CD14-positive monocyte (primary cell): ENCODE measurements at regions of chr15 and their contacts with region 1.

Region 1: GRCh38 chr15:55282284-55282833 is 7.3 kb downstream of the RAB27A start:
- DNase-seq: peak; percentile 63 to 83 (median 82)
- H3K4me3 ChIP-seq: peak overlapping the region; percentile 5 to 65 (median 49)
- H3K4me3 Mint-ChIP-seq: peak overlapping the region; percentile 76 to 84
- H3K27ac ChIP-seq: peak overlapping the region; percentile 84 to 89
- H3K27ac Mint-ChIP-seq: peak overlapping the region; percentile 91 to 99 (median 97)
- H3K4me1 ChIP-seq: peaks cover 92 to 97% of the 10 kb centered on the region in 2 donors
- H3K4me1 Mint-ChIP-seq: peaks cover 96% of the 10 kb centered on the region
- H3K27me3 ChIP-seq: no peaks in the 10 kb centered on the region
- H3K27me3 Mint-ChIP-seq: no peaks in the 10 kb centered on the region
- CTCF ChIP-seq: no peak

Region 2: DNA sequence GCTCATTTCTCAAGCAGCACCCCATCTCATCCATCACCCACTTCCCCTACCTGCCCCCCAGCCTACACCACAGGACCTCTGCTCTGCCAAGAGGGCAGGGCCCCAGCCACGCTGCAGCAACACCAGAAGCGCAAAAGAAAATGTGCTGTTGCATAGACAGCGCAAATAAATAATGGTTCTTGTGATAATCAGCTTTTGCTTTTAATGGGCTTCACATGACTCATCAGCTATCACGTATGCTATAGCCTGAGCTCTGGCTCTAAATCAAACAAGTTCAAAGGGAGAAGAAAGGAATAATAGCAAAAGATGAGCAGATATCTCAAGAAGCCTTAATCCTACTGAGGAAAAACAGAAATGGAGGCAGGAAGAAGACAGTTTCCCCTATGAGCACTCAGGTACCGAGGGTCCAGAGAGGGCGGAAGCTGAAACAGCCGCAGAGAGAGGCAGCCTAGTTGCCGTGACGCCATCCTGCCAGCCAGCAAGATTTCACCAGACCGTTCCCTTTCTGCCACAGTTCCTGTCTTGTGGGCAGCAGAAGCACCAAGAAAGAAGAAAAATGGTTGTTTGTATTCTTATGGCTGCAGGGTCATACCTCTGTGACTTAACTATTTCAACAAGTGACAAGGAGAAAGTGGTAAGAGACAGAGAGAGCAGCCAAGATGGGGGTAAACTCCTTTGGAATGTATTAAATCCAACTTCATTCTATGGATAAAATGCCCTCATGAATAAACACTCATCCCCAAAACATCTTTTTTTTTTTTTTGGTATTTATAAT is 14.8 kb before region 1 on chr15:
- intact Hi-C with region 1: loop called in 1 of 2 experiments (anchors 2 kb)
- DNase-seq: peak; percentile 80 to 92 (median 84)
- H3K4me3 ChIP-seq: peak overlapping the region; percentile 26 to 59 (median 50)
- H3K4me3 Mint-ChIP-seq: peak overlapping the region; percentile 67 to 76
- H3K27ac ChIP-seq: peak overlapping the region; percentile 84 to 92
- H3K27ac Mint-ChIP-seq: peak overlapping the region; percentile 91 to 97 (median 96)
- H3K4me1 ChIP-seq: peaks cover 33 to 36% of the 10 kb centered on the region in 2 donors
- H3K4me1 Mint-ChIP-seq: peaks cover 68% of the 10 kb centered on the region
- H3K27me3 ChIP-seq: no peaks in the 10 kb centered on the region
- H3K27me3 Mint-ChIP-seq: no peaks in the 10 kb centered on the region
- CTCF ChIP-seq: no peak

Region 3: DNA sequence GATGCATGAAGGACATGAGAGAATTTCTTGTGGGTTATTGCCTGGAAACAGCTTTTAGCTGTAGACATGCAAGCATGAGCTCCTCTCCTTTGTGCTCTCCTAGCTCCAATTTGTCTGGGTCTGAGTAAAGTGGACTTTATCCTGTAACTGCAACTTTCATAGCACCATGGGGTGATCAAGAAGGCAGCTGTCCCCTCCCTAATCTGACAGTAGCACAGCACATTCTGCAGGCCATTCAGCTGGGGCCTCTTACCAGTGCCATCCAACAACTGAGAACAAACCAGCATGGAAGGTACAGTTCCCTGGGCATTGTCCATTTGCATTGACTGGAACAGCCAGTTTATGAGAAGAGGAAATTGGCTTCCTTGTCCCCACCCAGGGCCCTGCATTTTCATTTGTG is 15.0 kb after region 1 on chr15:
- intact Hi-C with region 1: no loop called
- DNase-seq: no peak
- H3K4me3 ChIP-seq: no peak overlapping the region
- H3K4me3 Mint-ChIP-seq: no peak overlapping the region
- H3K27ac ChIP-seq: no peak overlapping the region
- H3K27ac Mint-ChIP-seq: no peak overlapping the region
- H3K4me1 ChIP-seq: peaks cover 7 to 17% of the 10 kb centered on the region in 2 donors
- H3K4me1 Mint-ChIP-seq: peaks cover 20% of the 10 kb centered on the region
- H3K27me3 ChIP-seq: no peaks in the 10 kb centered on the region
- H3K27me3 Mint-ChIP-seq: peaks cover 0 to 1% (median 1%) of the 10 kb centered on the region in 3 donors
- CTCF ChIP-seq: no peak